Lower lobe of right lung (tissue), 2 donors: ENCODE measurements at regions of chr13 and their contacts with region 1.

Region 1: GRCh38 chr13:95181586-95181985 is 119.7 kb downstream of the ABCC4 start:
- DNase-seq: no peak
- ATAC-seq: no peak
- H3K4me3 ChIP-seq: no peak overlapping the region
- H3K27ac ChIP-seq: no peak overlapping the region
- H3K4me1 ChIP-seq: peaks cover 25% of the 10 kb centered on the region
- H3K27me3 ChIP-seq: no peaks in the 10 kb centered on the region
- CTCF ChIP-seq: no peak

Region 2: DNA sequence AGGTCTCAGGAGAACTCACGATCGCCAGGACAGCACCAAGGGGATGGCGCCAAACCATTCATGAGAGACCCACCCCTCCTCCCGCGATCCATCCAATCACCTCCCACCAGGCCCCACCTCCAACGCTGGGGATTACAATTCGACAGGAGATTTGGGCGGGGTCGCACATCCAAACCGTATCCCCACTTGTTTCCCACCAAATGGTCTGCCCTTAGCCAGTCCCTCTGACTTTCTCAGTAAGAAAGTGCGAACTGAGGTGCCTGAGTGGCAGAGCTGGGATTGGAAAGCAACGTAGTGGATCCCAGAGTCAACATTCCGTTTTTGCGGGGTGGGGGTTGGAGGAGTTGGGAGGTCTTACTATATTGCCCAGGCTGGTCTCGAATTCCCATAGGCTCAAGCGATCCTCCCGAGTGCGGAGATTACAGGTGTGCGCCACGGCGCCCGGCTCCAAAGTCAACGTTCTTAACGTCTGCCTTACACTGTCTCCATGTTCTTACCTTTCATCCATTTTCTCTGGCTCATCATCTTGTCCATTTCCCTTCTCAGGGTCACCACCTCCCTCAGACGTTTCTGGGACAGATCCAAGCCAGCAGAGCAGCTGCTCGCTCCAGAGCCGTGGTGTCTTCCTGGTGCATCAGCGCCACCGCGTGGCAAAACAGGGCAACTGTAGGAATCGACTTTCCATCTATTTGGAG is 222.4 kb after region 1 on chr13:
- intact Hi-C with region 1: loop called (anchors 10 kb)
- DNase-seq: peak; percentile 86
- ATAC-seq: peak; percentile 89 to 91
- H3K4me3 ChIP-seq: peak overlapping the region; percentile 40
- H3K27ac ChIP-seq: no peak overlapping the region
- H3K4me1 ChIP-seq: peaks cover 8% of the 10 kb centered on the region
- H3K27me3 ChIP-seq: no peaks in the 10 kb centered on the region
- CTCF ChIP-seq: peak; percentile 90